ENCODE measurements at regions of chr17 and their contacts with region 1.

Region 1: GRCh38 chr17:7045909-7046724 is 2.2 kb upstream of the SLC16A11 start:
- DNase-seq: peak; percentile 53
- ATAC-seq: peak; percentile 62
- H3K4me3 ChIP-seq: peak overlapping the region; percentile 58
- H3K27ac ChIP-seq: peak overlapping the region; percentile 5; the same call in 1 of the 2 replicates
- H3K4me1 ChIP-seq: peaks cover 17% of the 10 kb centered on the region
- H3K27me3 ChIP-seq: peaks cover 0 to 2% of the 10 kb centered on the region in 2 experiments; a peak in 2 of 4 replicates
- CTCF ChIP-seq: peak; percentile 58 to 87 (median 65)
- EP300 ChIP-seq: no peak
- POLR2A ChIP-seq: no peak
- RAD21 ChIP-seq: peak; percentile 95

Region 2: DNA sequence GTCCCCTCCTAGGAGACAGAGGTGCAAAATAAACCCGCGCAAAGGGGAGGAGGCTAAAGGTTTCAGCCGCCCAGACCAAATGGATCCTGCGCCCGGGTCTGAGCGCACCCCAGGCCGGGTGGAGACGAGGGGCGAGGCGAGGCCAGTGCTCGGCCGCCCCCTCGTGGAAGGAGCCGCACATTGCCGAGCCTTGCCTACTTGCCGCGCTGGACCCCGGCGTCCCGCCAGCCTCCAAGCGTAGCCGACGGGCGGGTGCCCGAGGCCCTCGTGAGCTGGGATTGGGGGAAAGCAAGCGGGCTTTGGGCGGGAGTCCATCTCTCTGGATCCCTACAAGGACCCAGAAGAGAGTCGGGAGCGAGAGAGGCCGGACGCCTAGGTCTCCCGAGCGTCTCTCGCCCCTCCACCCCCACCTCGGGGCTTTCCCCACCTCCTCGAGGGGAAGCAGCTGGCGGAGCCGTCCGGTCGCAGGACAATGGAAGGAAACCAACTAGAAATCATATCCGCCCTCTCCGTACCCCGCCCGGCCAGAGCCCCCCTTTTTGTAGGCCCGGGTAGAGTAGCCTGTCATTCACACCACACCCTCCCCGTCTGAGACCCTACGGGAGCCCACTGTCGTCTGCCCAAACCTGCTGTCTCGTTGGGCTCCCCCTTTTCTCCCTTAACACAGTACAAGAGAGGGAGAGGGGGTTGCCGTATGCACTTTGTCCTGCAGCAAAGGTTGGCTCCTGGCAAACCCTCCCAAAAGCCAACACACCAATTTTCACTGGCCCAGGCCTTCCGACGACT is 23.9 kb before region 1 on chr17:
- CTCF ChIA-PET with region 1: interaction called, 11 read pairs
- POLR2A ChIA-PET with region 1: interaction called, 4 read pairs
- RAD21 ChIA-PET with region 1: interaction called, 25 read pairs
- SMC1A ChIA-PET with region 1: interaction called, 5 read pairs
- in situ Hi-C with region 1: no loop called
- intact Hi-C with region 1: no loop called
- DNase-seq: no peak
- ATAC-seq: peak; percentile 86
- H3K4me3 ChIP-seq: peak overlapping the region; percentile 40; the same call in 1 of the 2 replicates
- H3K27ac ChIP-seq: peak overlapping the region; percentile 18; the same call in 1 of the 2 replicates
- H3K4me1 ChIP-seq: peaks cover 25% of the 10 kb centered on the region
- H3K27me3 ChIP-seq: no peaks in the 10 kb centered on the region
- CTCF ChIP-seq: peak; percentile 93 to 96 (median 96)
- EP300 ChIP-seq: no peak
- POLR2A ChIP-seq: peak; percentile 31; the same call in 1 of the 2 replicates
- RAD21 ChIP-seq: peak; percentile 72

Region 3: DNA sequence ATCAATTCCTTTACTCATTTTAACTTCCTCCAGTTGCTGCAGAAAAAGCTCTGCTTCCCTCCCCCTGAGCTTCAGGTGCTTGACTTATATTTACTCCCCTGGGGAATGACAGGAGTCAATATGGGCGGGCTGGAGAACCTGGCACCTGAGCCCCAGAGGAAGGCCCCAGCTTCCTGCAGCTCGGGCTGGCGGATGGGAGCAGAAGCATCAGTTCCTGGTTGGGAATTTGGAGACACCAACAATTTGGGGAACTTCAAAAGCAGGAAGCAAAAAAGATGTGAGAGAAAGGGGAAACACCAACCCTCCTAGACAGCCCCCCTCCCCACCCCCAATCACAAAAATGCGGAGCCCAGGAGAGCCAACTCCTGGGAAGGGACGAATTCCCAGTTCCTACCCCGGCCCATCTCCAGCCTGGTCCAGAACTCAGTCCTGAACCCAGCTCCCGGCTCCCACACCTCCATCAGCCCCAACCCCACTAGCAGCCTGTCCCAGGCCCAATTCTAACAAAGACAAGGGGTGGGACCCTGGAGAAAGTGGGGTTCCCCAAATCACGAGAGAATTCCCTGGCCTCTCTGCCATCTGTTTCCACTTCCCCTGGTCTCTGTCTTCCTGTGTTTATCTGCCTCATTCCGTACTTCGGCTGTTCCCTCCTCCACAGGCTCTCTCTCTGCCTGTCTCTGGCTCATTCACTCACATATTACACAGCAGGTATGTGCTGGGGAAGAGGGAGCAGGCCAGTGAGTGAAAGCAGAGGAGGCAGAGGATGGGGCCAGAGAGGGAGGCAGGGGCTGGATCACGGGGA is 84.7 kb after region 1 on chr17:
- CTCF ChIA-PET with region 1: interaction called, 590 read pairs
- POLR2A ChIA-PET with region 1: interaction called, 35 read pairs
- RAD21 ChIA-PET with region 1: interaction called, 269 read pairs
- SMC1A ChIA-PET with region 1: interaction called, 356 read pairs
- in situ Hi-C with region 1: loop called (anchors 5 kb)
- intact Hi-C with region 1: loop called (anchors 1 kb)
- DNase-seq: no peak
- ATAC-seq: no peak
- H3K4me3 ChIP-seq: no peak overlapping the region
- H3K27ac ChIP-seq: peak overlapping the region; percentile 99
- H3K4me1 ChIP-seq: peaks cover 27% of the 10 kb centered on the region
- H3K27me3 ChIP-seq: no peaks in the 10 kb centered on the region
- CTCF ChIP-seq: no peak
- EP300 ChIP-seq: no peak
- POLR2A ChIP-seq: no peak
- RAD21 ChIP-seq: no peak

Region 4: DNA sequence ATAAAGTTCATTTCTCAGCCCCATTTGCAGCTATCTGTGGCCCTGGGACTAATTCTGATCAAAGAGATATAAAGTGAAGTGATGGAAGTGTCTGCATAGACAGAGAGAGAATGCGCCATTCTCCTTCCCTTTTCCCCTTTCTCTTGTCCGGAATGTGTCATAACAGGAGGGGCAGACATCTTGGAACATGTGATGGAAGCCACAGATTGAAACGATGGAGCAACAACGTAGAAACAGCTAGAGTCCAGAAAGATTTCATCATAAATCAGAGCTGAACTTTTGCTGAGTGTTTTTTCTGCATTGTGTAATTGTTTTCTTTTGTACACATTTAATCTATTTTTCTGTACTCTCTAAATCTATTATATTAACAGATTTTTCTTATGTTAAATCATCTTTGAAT is 121.7 kb after region 1 on chr17:
- CTCF ChIA-PET with region 1: interaction called, 10 read pairs
- POLR2A ChIA-PET with region 1: no interaction called
- RAD21 ChIA-PET with region 1: interaction called, 6 read pairs
- SMC1A ChIA-PET with region 1: interaction called, 5 read pairs
- in situ Hi-C with region 1: no loop called
- intact Hi-C with region 1: no loop called
- DNase-seq: no peak
- ATAC-seq: no peak
- H3K4me3 ChIP-seq: no peak overlapping the region
- H3K27ac ChIP-seq: no peak overlapping the region
- H3K4me1 ChIP-seq: no peaks in the 10 kb centered on the region
- H3K27me3 ChIP-seq: no peaks in the 10 kb centered on the region
- CTCF ChIP-seq: no peak
- EP300 ChIP-seq: no peak
- POLR2A ChIP-seq: no peak
- RAD21 ChIP-seq: no peak

Region 5: DNA sequence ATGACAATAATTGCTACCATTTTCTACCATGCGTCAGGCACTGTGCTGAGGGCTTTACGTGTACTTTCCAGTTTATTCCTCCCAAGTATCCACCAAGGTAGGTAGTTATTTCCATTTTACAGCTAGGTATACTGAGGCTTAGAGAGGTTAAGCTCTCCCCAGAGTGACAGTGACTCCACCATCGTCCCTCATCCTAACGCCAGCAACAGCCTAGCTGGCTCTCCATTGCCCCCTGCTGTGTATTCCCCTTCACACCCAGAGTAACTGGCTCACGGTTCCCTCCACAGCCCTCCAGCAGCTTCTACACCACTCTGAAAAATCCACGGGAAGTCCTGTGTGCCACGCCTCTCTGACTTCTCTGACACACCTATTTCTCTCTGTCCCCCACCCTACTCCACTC is 140.1 kb after region 1 on chr17:
- CTCF ChIA-PET with region 1: interaction called, 12 read pairs
- POLR2A ChIA-PET with region 1: interaction called, 3 read pairs
- RAD21 ChIA-PET with region 1: no interaction called
- SMC1A ChIA-PET with region 1: interaction called, 4 read pairs
- in situ Hi-C with region 1: no loop called
- intact Hi-C with region 1: no loop called
- DNase-seq: no peak
- ATAC-seq: peak; percentile 73
- H3K4me3 ChIP-seq: no peak overlapping the region
- H3K27ac ChIP-seq: no peak overlapping the region
- H3K4me1 ChIP-seq: no peaks in the 10 kb centered on the region
- H3K27me3 ChIP-seq: no peaks in the 10 kb centered on the region
- CTCF ChIP-seq: peak in 2 of 3 experiments; percentile 36 to 40; a peak in 3 of 6 replicates
- EP300 ChIP-seq: no peak
- POLR2A ChIP-seq: no peak
- RAD21 ChIP-seq: no peak

Region 6: DNA sequence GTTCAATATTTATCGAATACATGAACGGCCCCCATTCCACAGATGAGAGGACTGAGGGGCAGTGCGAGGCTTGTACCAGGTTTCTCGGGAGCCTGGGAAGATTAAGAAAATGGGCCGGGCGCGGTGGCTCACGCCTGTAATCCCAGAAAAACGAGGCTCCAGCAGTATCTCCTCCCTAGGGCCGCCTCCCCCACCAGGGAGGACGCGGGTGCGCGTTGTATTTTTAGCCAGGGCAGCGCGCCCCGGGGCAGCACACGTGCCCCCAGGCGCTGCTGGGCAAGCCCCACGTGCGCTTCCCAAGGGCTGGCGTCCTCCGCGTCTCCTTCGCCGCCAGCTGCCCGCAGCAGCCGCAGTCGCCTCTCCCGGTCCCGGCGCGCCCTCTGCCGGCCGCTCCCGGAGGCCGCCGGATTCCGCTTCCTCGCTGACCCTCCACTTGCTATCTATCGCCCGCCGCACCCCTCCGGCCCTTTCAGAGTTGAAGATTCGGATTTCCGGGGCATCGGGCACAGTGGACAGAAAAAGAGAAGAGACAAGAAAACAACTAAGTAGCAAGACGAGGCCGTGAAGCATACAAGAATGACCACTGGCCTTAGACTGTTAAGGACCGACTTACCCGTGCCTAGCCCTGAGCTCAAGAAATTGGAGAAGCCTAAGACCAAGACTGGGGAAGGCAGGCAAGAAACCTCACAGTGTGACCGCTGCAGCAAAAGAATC is 250.2 kb after region 1 on chr17:
- CTCF ChIA-PET with region 1: interaction called, 20 read pairs
- POLR2A ChIA-PET with region 1: no interaction called
- RAD21 ChIA-PET with region 1: interaction called, 11 read pairs
- SMC1A ChIA-PET with region 1: interaction called, 12 read pairs
- in situ Hi-C with region 1: loop called (anchors 5 kb)
- intact Hi-C with region 1: loop called (anchors 2 kb)
- DNase-seq: no peak
- ATAC-seq: peak; percentile 89
- H3K4me3 ChIP-seq: peak overlapping the region; percentile 11; the same call in 1 of the 2 replicates
- H3K27ac ChIP-seq: no peak overlapping the region
- H3K4me1 ChIP-seq: peaks cover 3% of the 10 kb centered on the region
- H3K27me3 ChIP-seq: peaks cover 3 to 5% of the 10 kb centered on the region in 2 experiments
- CTCF ChIP-seq: peak; percentile 84 to 93 (median 86); a peak in 5 of 6 replicates
- EP300 ChIP-seq: no peak
- POLR2A ChIP-seq: no peak
- RAD21 ChIP-seq: peak; percentile 74

Region 7: GRCh38 chr17:7435221-7435675 is 389.1 kb after region 1 on chr17 and contains the start of gene TMEM102:
- CTCF ChIA-PET with region 1: no interaction called
- POLR2A ChIA-PET with region 1: no interaction called
- RAD21 ChIA-PET with region 1: no interaction called
- SMC1A ChIA-PET with region 1: no interaction called
- in situ Hi-C with region 1: no loop called
- intact Hi-C with region 1: loop called (anchors 10 kb)
- DNase-seq: peak; percentile 97
- ATAC-seq: peak; percentile 87
- H3K4me3 ChIP-seq: peak within 1 kb of the TSS; percentile 78
- H3K27ac ChIP-seq: peak within 1 kb of the TSS; percentile 60
- H3K4me1 ChIP-seq: peaks cover 19% of the 10 kb centered on the region
- H3K27me3 ChIP-seq: peaks cover 0 to 4% of the 10 kb centered on the region in 2 experiments; a peak in 1 of 4 replicates
- CTCF ChIP-seq: no peak
- EP300 ChIP-seq: no peak
- POLR2A ChIP-seq: 0 out of 2 replicates have a peak, but pooled peaks have one; percentile 28
- RAD21 ChIP-seq: no peak
- polyA plus RNA-seq, gene TMEM102: 0.04 TPM in 1 of 2 experiments, not detected in the other